Calu3 (cell line): ENCODE measurements at regions of chr1 and their contacts with region 1.

Region 1: DNA sequence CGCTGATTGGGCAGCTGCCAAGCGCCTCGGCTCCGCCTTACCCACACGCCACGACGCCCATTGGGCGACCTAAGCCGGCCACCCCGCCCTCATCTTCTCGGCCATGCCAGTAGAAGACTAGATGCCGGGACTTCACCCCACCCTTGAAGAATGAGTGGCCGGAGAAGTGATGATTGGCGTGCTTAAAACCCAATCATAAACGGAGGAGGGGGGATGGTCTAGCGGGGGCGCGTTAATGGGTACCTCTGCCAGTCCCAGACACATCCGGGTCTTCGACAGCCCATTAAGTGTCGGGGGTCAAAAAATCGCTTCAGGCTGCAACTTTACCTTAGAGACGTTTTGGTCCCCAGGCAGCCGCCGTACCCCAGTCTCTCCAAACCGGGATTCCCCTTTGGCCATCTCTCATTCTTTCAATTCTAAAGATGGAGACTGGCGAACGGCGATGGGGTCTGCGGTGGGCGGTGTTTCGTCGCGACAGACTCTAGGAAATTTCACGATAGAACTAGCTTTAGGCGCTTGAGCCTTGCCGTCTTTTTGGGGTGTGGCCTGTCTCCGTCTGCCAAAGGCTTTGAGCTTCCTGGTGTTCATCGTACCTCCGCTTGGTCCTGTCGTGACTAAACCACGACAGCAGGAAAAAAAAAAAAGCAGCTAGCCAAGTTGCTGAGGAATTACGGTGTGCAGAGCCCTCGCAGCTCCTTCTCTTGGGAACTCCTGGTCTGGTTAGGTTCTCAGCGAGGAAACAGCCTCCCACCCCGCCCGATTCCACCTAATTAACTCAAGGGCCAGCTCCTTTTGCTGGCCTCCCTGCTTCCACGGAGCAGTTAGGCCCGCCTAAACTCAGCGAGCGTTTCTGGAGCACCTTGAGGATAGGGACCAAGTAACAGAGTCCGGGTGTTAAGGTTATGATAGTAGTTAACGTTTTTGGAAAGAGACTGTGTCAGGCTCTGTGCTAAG is at the start of gene GATAD2B:
- DNase-seq: peak; percentile 100
- H3K4me3 Mint-ChIP-seq: peak within 1 kb of the TSS; percentile 74
- H3K27ac Mint-ChIP-seq: peak within 1 kb of the TSS; percentile 91
- H3K4me1 Mint-ChIP-seq: peaks cover 25% of the 10 kb centered on the region
- H3K27me3 Mint-ChIP-seq: no peaks in the 10 kb centered on the region
- CTCF ChIP-seq: no peak
- total RNA-seq, gene GATAD2B: 58.3 and 62.5 TPM in 2 replicates

Region 2: GRCh38 chr1:153827168-153827964 is 95.9 kb before region 1 on chr1:
- CTCF ChIA-PET with region 1: no interaction called
- intact Hi-C with region 1: loop called (anchors 5 kb)
- DNase-seq: no peak
- H3K4me3 Mint-ChIP-seq: no peak overlapping the region
- H3K27ac Mint-ChIP-seq: no peak overlapping the region
- H3K4me1 Mint-ChIP-seq: no peaks in the 10 kb centered on the region
- H3K27me3 Mint-ChIP-seq: no peaks in the 10 kb centered on the region
- CTCF ChIP-seq: no peak

Region 3: DNA sequence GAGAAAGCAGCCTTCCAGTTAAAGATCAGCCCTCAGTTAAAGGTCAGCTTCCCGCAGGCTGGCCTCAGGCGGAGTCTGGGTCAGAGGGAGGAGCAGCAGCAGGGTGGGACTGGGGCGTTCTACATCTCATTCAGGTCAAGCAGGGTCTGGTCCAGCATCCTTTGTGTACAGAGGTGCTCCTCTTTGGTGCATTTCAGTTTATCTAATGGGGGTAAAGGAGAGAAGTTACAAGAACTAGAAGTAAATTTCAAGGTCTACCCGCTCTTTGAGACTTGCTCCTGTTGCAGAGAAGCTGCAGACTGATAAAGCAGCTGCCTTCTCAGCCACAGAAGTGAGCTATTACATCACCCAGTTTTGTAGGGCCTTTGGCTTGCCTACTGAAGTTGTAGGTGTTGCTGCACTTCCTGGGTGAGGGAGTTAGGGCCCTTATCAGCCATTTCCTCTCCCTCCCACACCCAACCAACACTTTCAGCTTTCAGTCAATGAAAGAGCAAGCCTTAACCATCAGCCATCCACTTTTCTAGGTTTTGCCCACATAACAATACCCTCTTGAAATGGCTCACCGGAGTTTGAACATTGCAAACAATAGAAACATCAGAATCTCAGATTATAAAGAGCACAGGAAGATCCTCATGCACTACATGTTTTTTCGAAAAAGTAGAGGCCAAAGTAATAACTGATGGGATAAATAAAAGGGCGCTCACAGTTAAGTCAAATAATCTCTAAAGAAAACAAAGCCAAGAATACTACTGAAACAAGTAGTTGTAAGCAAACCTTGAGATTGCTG is 234.5 kb after region 1 on chr1:
- CTCF ChIA-PET with region 1: no interaction called
- intact Hi-C with region 1: no loop called
- DNase-seq: peak; percentile 30
- H3K4me3 Mint-ChIP-seq: peak overlapping the region; percentile 28
- H3K27ac Mint-ChIP-seq: peak overlapping the region; percentile 84
- H3K4me1 Mint-ChIP-seq: peaks cover 26% of the 10 kb centered on the region
- H3K27me3 Mint-ChIP-seq: no peaks in the 10 kb centered on the region
- CTCF ChIP-seq: no peak

Region 4: GRCh38 chr1:154176337-154176736 is 253.1 kb after region 1 on chr1:
- CTCF ChIA-PET with region 1: no interaction called
- intact Hi-C with region 1: no loop called
- DNase-seq: peak; percentile 31
- H3K4me3 Mint-ChIP-seq: no peak overlapping the region
- H3K27ac Mint-ChIP-seq: peak overlapping the region; percentile 82
- H3K4me1 Mint-ChIP-seq: peaks cover 49% of the 10 kb centered on the region
- H3K27me3 Mint-ChIP-seq: no peaks in the 10 kb centered on the region
- CTCF ChIP-seq: no peak

Region 5: GRCh38 chr1:154220071-154220969 is 297.1 kb after region 1 on chr1 and contains the start of gene UBAP2L:
- CTCF ChIA-PET with region 1: no interaction called
- intact Hi-C with region 1: no loop called
- DNase-seq: peak; percentile 99
- H3K4me3 Mint-ChIP-seq: peak within 1 kb of the TSS; percentile 80
- H3K27ac Mint-ChIP-seq: peak within 1 kb of the TSS; percentile 88
- H3K4me1 Mint-ChIP-seq: peaks cover 35% of the 10 kb centered on the region
- H3K27me3 Mint-ChIP-seq: no peaks in the 10 kb centered on the region
- CTCF ChIP-seq: no peak
- total RNA-seq, gene UBAP2L: 245 and 250 TPM in 2 replicates